ENCODE measurements at regions of chr5 and their contacts with region 1.

Region 1: GRCh38 chr5:87780831-87781760 is 368.4 kb upstream of the CCNH start:
- DNase-seq: peak; percentile 63 to 69
- H3K4me3 ChIP-seq: peak overlapping the region; percentile 36; the same call in 1 of the 2 replicates
- H3K27ac ChIP-seq: no peak overlapping the region
- H3K4me1 ChIP-seq: no peaks in the 10 kb centered on the region
- H3K27me3 ChIP-seq: no peaks in the 10 kb centered on the region
- CTCF ChIP-seq: peak; percentile 90

Region 2: DNA sequence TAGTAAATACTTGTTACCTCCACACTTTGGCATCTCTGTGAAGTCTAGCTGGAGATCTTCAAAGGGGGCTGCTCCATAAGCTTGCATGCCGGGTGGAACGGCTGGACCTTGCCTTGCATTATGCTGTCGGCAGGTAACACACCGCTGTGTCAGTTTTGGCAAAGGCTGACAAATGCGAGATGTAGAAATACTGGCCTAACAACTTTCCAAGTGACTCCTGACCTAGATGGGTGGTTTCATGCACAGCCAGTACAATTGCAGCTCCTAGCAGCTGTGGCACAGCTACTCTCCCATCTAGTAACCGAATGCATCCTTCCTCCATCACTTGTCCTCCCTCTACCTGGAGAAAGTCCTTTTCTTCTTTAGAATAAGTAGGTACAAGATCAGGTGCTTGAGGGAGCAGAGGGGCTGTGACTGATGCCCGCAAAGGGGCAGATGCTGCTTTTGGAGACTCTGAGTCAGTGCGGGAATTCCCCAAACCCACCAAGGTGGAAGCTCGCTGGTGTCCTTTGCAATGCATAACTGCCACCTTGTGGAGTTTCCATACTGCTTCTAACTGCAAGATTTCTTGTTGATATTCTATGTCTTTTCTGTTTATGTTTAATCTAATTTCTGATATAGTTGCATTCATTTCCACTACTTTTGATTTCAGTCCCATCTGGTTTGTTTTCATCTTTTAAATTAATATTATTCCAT is 409.2 kb after region 1 on chr5:
- CTCF ChIA-PET with region 1: interaction called, 9 read pairs
- POLR2A ChIA-PET with region 1: no interaction called
- intact Hi-C with region 1: loop called (anchors 1 kb)
- DNase-seq: peak; percentile 64 to 85
- H3K4me3 ChIP-seq: peak overlapping the region; percentile 57
- H3K27ac ChIP-seq: peak overlapping the region; percentile 80
- H3K4me1 ChIP-seq: peaks cover 12% of the 10 kb centered on the region
- H3K27me3 ChIP-seq: no peaks in the 10 kb centered on the region
- CTCF ChIP-seq: peak; percentile 75

Region 3: DNA sequence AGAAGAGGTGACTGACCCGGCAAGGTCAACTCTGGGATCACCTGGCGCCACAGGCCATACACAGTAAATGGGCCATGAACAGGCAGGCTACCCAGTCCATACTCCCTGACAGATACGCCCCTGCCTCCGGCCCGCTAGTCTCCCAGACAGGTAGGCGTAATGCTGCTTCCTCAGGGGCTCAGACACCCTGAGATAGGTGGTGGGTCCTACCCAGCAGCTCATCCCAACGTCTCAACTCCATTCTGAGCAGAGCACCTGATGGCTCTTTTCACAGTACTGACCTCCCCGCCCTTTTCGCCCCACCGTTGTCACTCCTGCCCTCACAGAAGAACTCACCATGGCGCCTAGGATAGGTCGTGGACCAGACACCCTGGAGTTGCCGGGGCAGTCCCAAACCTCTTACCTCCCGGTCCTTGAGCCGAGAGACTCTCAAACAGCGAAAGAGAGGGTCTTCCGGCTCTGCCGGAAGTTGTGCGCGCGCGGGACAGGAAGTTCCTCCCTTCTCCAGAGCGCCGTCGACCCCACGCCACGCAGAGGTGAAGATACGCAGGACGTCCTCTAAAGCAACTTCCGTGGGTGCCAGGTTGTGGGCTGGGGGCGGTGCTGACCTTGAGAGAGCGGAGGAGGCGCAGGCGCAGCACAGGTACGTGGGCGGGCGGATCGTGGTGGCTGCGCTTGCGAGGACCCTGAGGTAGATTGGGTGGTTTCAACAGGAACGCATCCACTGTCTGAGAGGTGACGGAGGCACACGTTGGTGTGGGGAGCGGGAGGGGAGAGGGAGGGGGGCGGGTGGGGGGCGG is 487.5 kb after region 1 on chr5 and contains the start of gene TMEM161B:
- CTCF ChIA-PET with region 1: no interaction called
- POLR2A ChIA-PET with region 1: no interaction called
- intact Hi-C with region 1: loop called (anchors 10 kb)
- DNase-seq: peak; percentile 87 to 93
- H3K4me3 ChIP-seq: peak within 1 kb of the TSS; percentile 93
- H3K27ac ChIP-seq: peak within 1 kb of the TSS; percentile 58
- H3K4me1 ChIP-seq: peaks cover 33% of the 10 kb centered on the region
- H3K27me3 ChIP-seq: no peaks in the 10 kb centered on the region
- CTCF ChIP-seq: no peak
- total RNA-seq, gene TMEM161B: 17.3 and 24.8 TPM in 2 replicates

Region 4: DNA sequence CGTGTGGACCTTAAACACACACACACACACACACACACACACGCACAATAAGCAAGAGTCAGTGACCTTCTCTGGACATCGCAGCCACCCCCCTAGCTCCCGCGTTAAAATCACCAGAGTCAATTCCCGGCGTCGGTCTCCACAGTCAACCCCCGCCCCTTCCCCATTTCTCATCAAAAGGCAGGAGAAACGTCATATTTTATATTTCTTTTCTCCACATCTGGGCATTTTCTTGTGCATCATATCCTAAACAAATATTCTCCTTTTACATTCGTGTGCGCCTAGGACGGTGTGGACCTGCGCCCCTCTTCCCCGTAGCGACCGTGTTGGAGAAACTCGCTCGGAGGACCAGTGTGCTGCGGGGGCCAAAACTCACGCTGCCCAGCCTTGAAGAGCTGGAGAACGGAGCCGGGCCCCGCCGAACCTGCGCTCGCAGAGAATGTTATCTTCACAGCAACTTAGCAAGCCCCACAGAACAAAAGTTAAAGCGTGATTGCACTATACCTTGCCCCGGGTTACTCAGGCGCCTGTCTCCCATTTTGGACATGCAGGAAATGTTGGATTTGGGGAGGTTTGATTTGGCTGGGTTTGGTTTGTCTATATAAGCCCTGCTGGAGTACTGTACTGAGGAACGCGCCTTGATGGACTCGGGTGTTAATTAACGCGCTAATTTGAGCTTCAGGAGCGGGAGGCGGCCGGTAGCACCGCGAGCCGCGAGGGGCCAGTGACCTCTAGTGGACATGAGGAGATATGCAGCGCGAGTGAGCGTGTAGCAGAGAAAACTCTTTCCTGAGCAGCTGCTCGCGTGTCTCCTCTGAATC is 909.5 kb after region 1 on chr5:
- CTCF ChIA-PET with region 1: interaction called, 19 read pairs
- POLR2A ChIA-PET with region 1: no interaction called
- intact Hi-C with region 1: loop called (anchors 1 kb)
- DNase-seq: peak in 1 of 2 experiments; percentile 62
- H3K4me3 ChIP-seq: peak overlapping the region; percentile 24; the same call in 1 of the 2 replicates
- H3K27ac ChIP-seq: no peak overlapping the region
- H3K4me1 ChIP-seq: peaks cover 18% of the 10 kb centered on the region
- H3K27me3 ChIP-seq: no peaks in the 10 kb centered on the region
- CTCF ChIP-seq: peak; percentile 95

Region 5: DNA sequence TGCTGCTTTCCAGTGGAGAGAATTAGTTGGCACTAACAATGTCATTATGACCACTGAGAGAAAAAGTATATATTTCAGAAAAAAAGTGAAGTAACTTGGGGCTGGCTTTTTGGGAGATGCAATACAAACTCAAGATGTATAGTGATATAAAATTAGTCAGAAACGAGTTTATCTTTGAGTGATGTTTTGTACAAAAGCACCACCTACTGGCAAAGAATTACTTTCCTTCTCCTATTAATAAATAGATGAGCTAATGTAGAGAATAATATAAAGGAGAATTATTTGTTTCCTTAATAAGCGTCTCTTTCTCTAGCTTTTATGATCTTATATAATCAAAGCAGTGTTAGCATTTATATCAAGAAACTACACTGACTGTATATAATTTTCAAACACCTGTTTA is 943.1 kb after region 1 on chr5:
- CTCF ChIA-PET with region 1: interaction called, 26 read pairs
- POLR2A ChIA-PET with region 1: no interaction called
- intact Hi-C with region 1: loop called (anchors 2 kb)
- DNase-seq: peak in 1 of 2 experiments; percentile 35
- H3K4me3 ChIP-seq: no peak overlapping the region
- H3K27ac ChIP-seq: no peak overlapping the region
- H3K4me1 ChIP-seq: no peaks in the 10 kb centered on the region
- H3K27me3 ChIP-seq: no peaks in the 10 kb centered on the region
- CTCF ChIP-seq: peak; percentile 71

Measured in PC-9 (cell line).